PC-9 (cell line): ENCODE measurements at regions of chr2 and their contacts with region 1.

Region 1: DNA sequence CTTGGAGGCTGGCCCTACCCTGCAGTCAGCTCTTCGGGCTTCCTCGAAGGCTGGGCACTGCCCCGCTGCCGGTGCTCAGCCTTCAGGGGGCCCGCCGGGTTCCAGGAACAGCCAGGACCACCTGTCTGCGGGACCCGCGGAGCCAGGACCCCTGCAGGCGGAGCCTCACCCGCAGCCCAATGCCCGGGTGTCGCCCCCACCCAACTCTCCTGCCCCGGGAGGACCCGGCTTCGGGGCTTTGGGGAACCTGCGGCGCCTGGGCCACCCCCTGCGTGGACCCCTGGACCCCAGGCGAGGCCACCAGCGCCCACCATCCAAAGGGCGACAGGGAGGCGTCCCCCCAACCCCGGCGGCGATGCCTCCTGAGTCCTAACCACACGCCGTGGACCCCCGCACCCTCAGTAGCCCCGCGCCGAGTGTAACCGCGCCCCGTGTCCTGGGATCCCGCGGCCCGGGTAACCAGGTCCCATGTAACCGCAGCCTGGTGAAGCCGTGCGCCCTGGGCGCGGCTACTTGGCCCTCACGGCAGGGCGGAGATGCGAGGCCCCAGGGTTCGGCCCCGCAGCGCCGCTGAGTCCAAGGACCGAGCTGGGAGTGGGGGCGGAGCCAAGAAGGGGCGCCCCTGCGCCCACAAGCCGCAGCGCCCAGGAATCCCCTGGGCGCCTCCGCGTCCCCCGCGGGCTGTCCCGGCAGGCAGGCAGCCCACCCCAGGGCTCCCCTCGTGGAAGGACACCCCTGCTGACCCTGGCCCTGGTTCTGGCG is 11.0 kb upstream of the UBE2F start:
- DNase-seq: no peak
- H3K4me3 ChIP-seq: no peak overlapping the region
- H3K27ac ChIP-seq: no peak overlapping the region
- H3K4me1 ChIP-seq: no peaks in the 10 kb centered on the region
- H3K27me3 ChIP-seq: no peaks in the 10 kb centered on the region
- CTCF ChIP-seq: no peak

Region 2: GRCh38 chr2:237904801-237905599 is 50.8 kb before region 1 on chr2:
- CTCF ChIA-PET with region 1: no interaction called
- POLR2A ChIA-PET with region 1: no interaction called
- intact Hi-C with region 1: no loop called
- DNase-seq: no peak
- H3K4me3 ChIP-seq: no peak overlapping the region
- H3K27ac ChIP-seq: no peak overlapping the region
- H3K4me1 ChIP-seq: no peaks in the 10 kb centered on the region
- H3K27me3 ChIP-seq: no peaks in the 10 kb centered on the region
- CTCF ChIP-seq: no peak

Region 3: GRCh38 chr2:237943395-237944094 is 12.3 kb before region 1 on chr2:
- CTCF ChIA-PET with region 1: interaction called, 10 read pairs
- POLR2A ChIA-PET with region 1: interaction called, 7 read pairs
- intact Hi-C with region 1: no loop called
- DNase-seq: no peak
- H3K4me3 ChIP-seq: no peak overlapping the region
- H3K27ac ChIP-seq: no peak overlapping the region
- H3K4me1 ChIP-seq: no peaks in the 10 kb centered on the region
- H3K27me3 ChIP-seq: no peaks in the 10 kb centered on the region
- CTCF ChIP-seq: no peak

Region 4: GRCh38 chr2:238030422-238031154 is 74.8 kb after region 1 on chr2:
- CTCF ChIA-PET with region 1: no interaction called
- POLR2A ChIA-PET with region 1: no interaction called
- intact Hi-C with region 1: no loop called
- DNase-seq: no peak
- H3K4me3 ChIP-seq: no peak overlapping the region
- H3K27ac ChIP-seq: no peak overlapping the region
- H3K4me1 ChIP-seq: no peaks in the 10 kb centered on the region
- H3K27me3 ChIP-seq: no peaks in the 10 kb centered on the region
- CTCF ChIP-seq: no peak

Region 5: DNA sequence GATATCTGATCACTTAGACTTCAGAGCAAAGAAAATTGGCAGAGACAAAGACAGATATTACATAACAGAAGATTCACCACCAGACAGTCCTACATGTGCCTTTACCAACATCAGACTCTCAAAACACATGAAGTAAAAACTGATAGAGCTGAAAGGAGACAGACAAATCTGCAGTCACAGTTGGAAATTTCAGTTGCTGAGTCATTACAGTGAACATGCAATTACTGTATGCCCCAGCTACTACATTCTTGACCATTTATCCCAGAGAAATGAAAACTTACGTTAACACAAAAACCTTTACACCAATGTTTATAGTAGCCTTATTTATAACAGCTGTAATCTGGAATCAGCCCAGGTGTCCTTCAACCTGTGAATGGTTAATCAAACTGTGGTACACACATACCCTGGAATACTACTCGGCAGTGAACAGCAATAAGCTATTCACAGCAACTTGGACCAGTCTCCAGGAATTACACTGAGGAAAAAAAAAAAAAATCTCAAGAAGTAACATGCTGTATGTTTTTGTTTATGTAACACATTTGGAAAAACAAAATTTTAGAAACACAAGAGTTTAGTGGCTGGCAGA is 97.5 kb after region 1 on chr2:
- CTCF ChIA-PET with region 1: no interaction called
- POLR2A ChIA-PET with region 1: interaction called, 10 read pairs
- intact Hi-C with region 1: no loop called
- DNase-seq: no peak
- H3K4me3 ChIP-seq: no peak overlapping the region
- H3K27ac ChIP-seq: no peak overlapping the region
- H3K4me1 ChIP-seq: no peaks in the 10 kb centered on the region
- H3K27me3 ChIP-seq: no peaks in the 10 kb centered on the region
- CTCF ChIP-seq: no peak

Region 6: DNA sequence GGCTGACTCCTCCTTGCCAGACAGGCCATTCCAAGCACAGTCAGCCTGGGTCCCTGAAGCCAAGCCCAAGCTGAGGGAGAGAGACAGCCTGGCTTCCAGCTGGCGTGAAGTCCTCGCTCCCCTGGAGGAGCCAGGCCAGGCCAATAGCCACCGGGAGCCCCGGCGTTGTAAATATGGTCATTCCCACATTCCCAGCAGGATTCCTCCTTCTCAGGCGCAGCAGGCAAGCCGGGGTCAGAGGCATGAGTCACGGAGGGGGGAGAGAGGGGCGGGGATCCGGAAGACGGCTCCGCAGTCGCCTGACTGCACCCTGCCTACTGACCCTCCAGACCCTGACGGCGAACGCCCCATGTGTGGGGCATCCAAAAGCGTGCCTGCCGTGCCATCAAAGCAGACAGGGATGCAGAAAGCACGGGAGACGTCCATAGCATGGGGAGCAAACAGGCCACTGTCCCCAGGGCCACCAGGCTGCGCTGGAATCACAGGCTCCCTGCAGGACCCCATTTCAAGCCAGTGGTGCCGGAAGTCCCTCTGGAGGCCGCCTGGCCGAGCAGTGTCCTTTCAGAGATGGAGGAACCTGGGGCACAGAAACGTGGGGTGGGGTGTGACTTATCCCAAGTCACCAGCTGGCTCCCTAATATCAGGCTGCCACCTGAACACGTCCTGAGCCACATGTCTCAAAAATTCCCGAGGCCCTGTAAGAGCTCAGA is 940.2 kb after region 1 on chr2:
- CTCF ChIA-PET with region 1: no interaction called
- POLR2A ChIA-PET with region 1: interaction called, 15 read pairs
- intact Hi-C with region 1: no loop called
- DNase-seq: peak; percentile 39 to 73
- H3K4me3 ChIP-seq: peak overlapping the region; percentile 41; the same call in 1 of the 2 replicates
- H3K27ac ChIP-seq: peak overlapping the region; percentile 65
- H3K4me1 ChIP-seq: peaks cover 25% of the 10 kb centered on the region
- H3K27me3 ChIP-seq: peaks cover 7% of the 10 kb centered on the region; the same call in 1 of the 2 replicates
- CTCF ChIP-seq: no peak